Posterior vena cava (tissue), 2 donors: ENCODE measurements at regions of chr12 and their contacts with region 1.

Region 1: DNA sequence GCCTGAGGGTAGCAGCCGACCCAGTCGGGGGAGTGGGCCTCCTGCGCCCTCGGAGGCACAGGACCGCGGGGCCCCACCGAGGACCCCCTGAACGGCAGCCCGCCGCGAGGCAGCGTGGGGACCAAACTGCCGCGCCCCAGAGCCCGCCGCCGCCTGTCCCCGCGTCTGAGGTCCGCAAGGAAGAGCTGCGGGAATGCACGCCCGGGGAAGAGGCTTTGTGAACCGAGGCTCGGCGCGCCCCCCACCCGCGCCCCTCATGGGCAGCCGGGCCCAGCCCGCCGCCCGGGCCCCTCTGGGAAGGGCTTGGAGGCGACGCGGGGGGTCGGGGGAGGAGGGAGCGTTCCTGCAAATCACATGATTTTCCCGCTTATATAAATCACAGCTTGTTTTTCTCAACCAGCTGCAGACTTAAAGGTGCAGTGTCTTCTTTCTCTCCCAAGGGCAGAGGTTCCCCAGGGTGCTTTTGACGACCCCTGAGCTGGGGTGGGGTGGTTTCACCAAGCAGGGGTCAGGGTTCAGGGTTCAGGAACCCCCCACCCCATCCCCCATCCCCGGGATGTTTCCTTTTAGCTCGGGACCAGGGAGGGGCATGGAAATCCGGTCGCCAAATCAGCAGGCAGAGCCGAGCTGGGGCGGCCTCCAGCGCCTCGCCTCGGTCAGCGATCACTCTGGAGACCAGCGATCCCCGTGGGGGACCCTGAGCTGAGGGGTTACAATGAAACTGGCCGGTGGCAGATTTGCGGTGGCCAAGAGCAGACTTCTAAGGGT is 44.7 kb upstream of the ATP23 start:
- DNase-seq: peak; percentile 92

Region 2: GRCh38 chr12:57754411-57755193 is 142.0 kb before region 1 on chr12 and contains the start of gene MARCHF9:
- intact Hi-C with region 1: loop called in 1 of 2 experiments (anchors 1 kb)
- DNase-seq: no peak
- total RNA-seq, gene MARCHF9: 7.4 to 9.4 TPM

Region 3: GRCh38 chr12:57845478-57846284 is 50.9 kb before region 1 on chr12:
- intact Hi-C with region 1: loop called in 1 of 2 experiments (anchors 2 kb)
- DNase-seq: peak; percentile 93

Region 4: GRCh38 chr12:58794859-58795258 is 898.2 kb after region 1 on chr12:
- intact Hi-C with region 1: no loop called
- DNase-seq: no peak